ENCODE measurements at regions of chr10 and their contacts with region 1.

Region 1: GRCh38 chr10:6667679-6668270 is 87.7 kb upstream of the PRKCQ start:
- DNase-seq: peak; percentile 83
- H3K4me3 Mint-ChIP-seq: no peak overlapping the region
- H3K27ac Mint-ChIP-seq: peak overlapping the region; percentile 31
- H3K4me1 Mint-ChIP-seq: peaks cover 22% of the 10 kb centered on the region
- H3K27me3 Mint-ChIP-seq: peaks cover 11% of the 10 kb centered on the region

Region 2: DNA sequence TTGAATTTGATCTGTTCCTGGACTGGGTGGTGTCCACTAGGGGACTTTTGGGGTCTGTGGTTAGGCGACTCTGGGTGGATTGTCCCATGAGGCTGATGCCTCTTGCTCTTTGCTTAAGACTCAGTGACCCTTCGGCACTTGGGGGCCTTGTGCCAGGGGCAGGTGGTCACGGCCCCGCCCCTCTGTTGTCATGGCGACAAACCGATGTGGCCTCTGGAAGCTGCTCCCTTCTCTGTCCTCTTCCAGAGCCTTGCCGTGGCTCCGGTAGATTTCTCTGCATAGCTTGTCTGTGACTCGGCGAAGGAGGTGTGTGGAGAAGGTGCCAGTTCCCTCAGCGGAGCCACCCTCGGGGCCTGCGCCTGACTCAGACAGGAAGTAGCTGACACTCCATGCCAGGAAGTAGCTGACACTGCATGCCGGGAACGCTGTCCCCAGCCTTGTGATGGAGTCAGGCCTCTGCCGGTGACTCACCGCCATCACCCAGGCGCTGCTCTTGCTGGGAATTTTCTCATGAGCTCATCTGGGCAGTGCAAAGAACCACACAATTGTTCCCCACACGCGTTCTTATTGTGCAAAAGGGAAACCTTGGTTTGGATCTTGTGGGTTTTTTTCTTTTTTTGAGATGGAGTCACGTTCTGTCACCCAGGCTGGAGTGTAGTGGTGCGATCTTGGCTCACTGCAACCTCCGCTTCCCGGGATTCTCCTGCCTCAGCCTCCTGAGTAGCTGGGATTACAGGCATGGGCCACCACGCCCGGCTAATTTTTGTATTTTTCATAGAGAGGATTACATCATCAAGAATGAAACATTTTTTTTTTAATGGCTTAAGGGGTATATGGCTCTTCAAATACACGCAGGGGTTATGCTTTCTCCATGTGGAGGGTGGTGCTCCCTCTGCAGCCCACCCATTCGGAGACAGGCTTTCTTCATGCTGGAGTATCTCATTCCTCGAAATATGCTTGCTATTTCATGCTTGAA is 392.5 kb before region 1 on chr10:
- intact Hi-C with region 1: loop called (anchors 10 kb)
- DNase-seq: peak; percentile 95
- H3K4me3 Mint-ChIP-seq: peak overlapping the region; percentile 79
- H3K27ac Mint-ChIP-seq: peak overlapping the region; percentile 95
- H3K4me1 Mint-ChIP-seq: peaks cover 65% of the 10 kb centered on the region
- H3K27me3 Mint-ChIP-seq: no peaks in the 10 kb centered on the region

Region 3: DNA sequence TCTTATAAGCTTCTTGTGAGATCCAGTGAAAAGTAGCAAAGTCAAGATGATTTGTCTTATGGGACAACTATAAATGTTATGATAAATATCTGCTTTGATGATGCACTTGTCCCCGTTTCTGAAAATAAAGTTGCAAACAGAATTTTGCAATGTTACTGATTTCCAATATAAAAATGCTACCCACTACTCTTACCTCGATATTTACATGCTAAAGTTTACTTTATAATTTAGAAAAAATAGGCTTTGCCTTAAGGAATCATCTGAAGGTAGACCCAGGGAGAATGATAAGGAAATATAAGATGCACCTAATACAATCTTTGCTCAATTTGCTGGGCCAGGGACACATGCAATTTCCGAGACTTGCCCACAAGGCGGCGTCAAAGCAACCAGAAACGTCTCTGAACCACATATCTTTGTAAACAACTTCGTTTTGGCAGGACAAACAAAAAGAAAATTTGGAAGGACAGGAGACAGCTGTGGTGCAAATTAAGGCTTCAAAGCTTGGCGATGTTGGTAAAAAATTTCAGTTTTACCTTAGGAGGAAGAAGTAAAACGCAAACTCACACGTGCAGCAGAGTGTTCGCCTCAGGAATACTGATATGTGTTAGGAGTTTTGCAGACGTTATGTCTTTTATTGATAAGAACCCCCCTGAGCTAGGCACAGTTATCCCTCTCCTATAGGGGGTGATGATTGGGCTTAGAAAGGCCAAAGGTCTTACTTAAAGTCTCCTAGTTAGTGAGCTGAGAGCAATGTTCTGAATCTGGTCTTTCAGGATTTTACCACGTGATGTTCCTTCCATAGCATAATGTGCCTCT is 222.1 kb before region 1 on chr10:
- intact Hi-C with region 1: loop called (anchors 1 kb)
- DNase-seq: peak; percentile 86
- H3K4me3 Mint-ChIP-seq: no peak overlapping the region
- H3K27ac Mint-ChIP-seq: peak overlapping the region; percentile 46
- H3K4me1 Mint-ChIP-seq: peaks cover 33% of the 10 kb centered on the region
- H3K27me3 Mint-ChIP-seq: no peaks in the 10 kb centered on the region

Region 4: DNA sequence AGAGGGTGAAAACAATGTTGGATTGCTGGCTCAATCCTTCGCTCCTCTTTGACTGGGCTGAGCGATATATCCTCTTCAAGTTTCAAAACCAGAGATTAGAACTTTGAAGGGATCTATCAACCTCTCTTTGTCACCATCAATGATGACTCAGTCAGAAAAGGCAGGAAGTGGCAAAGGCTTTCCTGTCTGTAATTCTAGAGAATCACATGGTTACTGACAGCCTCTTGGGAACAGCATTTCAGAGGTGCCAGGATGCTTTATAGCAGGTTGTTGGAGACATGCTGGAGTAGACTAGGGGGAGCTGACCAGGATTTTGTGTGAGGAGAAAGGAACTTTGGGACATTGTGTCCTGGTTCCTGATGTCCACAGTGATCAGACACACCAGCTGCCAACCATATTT is 169.0 kb before region 1 on chr10:
- intact Hi-C with region 1: loop called (anchors 5 kb)
- DNase-seq: peak; percentile 89
- H3K4me3 Mint-ChIP-seq: peak overlapping the region; percentile 78
- H3K27ac Mint-ChIP-seq: peak overlapping the region; percentile 84
- H3K4me1 Mint-ChIP-seq: peaks cover 42% of the 10 kb centered on the region
- H3K27me3 Mint-ChIP-seq: no peaks in the 10 kb centered on the region

Region 5: DNA sequence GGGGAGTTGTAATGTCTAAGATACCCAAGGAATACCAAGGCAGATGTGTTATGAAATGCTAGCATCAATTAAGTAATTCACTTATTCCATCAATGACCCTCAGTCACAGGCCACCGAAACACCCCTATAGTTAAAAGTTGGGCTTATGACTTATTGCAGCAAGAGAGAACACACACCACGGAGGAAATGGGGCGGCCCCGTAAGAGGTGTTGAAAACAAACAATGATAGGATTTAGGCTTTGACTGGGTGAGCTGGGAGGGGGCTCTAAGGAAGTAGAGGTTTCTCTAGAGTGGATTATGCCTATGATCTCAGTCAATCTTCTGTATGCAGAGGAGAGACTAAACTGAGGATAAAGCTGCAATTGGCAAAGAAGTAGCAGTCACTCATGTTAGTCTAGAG is 42.3 kb before region 1 on chr10:
- intact Hi-C with region 1: no loop called
- DNase-seq: no peak
- H3K4me3 Mint-ChIP-seq: no peak overlapping the region
- H3K27ac Mint-ChIP-seq: no peak overlapping the region
- H3K4me1 Mint-ChIP-seq: peaks cover 9% of the 10 kb centered on the region
- H3K27me3 Mint-ChIP-seq: no peaks in the 10 kb centered on the region

Region 6: DNA sequence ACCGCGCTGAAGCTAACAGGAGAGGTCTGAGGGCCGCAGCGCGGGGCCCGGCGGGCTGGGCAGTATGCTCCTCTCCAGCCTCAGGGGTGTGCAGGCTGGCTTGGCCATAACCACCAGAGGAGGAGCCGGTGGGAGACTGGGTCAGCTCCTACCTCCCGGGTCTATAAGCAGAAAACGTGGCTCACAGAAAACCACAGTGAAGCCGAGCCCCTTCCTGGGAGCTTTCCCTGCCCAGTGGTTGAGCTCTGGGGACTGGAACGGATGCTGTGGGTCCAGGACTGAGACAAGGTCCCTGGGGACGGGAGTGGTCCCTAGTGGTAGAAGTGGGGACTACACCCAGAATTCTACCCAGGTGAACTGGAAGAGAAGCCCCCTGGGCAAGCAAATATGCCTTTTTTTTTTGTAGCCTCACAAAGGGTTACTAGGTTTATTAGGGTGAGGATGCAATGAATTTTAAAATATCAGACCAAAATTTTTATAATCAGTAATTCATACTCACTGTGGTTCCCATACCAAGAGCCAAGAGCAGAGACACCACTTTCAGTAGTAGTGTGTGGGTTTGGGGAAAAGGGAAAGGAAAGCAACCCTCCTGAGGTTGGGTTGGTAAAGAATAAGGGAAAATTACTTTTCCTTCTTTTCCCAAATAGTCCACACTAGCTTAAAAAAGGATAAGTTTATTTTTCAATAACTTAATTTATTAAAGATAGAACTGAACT is 19.8 kb before region 1 on chr10:
- intact Hi-C with region 1: loop called (anchors 1 kb)
- DNase-seq: peak; percentile 91
- H3K4me3 Mint-ChIP-seq: no peak overlapping the region
- H3K27ac Mint-ChIP-seq: no peak overlapping the region
- H3K4me1 Mint-ChIP-seq: peaks cover 44% of the 10 kb centered on the region
- H3K27me3 Mint-ChIP-seq: no peaks in the 10 kb centered on the region

Region 7: DNA sequence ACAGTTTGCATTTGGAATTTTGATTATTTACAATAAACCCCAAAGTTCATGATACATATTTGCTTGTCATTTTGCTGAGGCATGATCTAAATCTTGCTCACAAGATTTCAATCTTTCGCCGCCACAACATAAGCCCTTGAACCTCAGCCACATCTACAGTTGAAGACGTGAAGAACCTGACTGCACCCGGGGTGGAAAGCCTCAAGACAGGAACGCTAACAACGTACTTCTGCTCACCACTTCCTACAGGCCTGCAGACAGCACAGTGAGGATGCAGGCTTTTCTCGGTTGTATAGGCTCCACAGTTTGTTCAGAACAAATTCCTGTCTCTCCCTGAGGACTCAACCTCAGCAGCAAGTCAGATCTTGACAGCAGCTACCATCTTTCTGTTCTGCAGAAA is 306.1 kb after region 1 on chr10:
- intact Hi-C with region 1: no loop called
- DNase-seq: peak; percentile 76
- H3K4me3 Mint-ChIP-seq: peak overlapping the region; percentile 53
- H3K27ac Mint-ChIP-seq: peak overlapping the region; percentile 9
- H3K4me1 Mint-ChIP-seq: peaks cover 13% of the 10 kb centered on the region
- H3K27me3 Mint-ChIP-seq: peaks cover 22% of the 10 kb centered on the region

Region 8: DNA sequence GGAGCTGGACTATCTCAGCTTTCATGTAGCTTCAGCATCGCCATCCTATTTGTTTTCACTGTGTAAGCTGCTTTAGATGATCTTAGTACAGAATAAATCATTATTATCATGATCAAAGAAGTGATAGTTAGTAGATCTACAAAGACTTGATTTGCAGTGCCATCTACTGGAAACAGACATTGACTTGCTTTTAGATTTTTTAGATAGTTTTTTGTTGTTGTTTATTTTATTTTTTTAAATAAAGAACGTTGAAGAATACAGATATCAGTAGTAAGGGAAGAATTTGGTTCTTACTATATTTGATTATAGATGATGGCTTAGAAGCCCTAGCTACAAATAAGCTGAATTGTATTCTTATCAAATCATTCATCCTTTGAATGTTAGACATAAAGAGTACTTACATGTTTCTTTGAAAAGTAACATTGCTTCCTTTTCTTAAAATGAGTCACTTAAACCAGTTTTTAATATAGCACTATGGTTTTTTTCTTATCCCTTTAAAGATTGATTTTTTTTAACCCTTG is 749.4 kb after region 1 on chr10:
- intact Hi-C with region 1: loop called (anchors 5 kb)
- DNase-seq: peak; percentile 64
- H3K4me3 Mint-ChIP-seq: no peak overlapping the region
- H3K27ac Mint-ChIP-seq: no peak overlapping the region
- H3K4me1 Mint-ChIP-seq: peaks cover 27% of the 10 kb centered on the region
- H3K27me3 Mint-ChIP-seq: peaks cover 30% of the 10 kb centered on the region

Measured in activated CD4-positive, alpha-beta T cell treated with anti-CD3 and anti-CD28 coated beads, Interleukin-2, amount 10 ng/mL, durations not matched to agents 24 days and 14 days (primary cell).